IMR-90 (cell line): ENCODE measurements at regions of chr13 and their contacts with region 1.

Region 1: GRCh38 chr13:60182907-60183306 is 19.2 kb upstream of the DIAPH3 start:
- DNase-seq: no peak
- ATAC-seq: no peak
- H3K4me3 ChIP-seq: no peak overlapping the region
- H3K27ac ChIP-seq: no peak overlapping the region
- H3K4me1 ChIP-seq: no peaks in the 10 kb centered on the region
- H3K27me3 ChIP-seq: peaks cover 2% of the 10 kb centered on the region
- CTCF ChIP-seq: no peak
- POLR2A ChIP-seq: no peak
- RAD21 ChIP-seq: no peak

Region 2: GRCh38 chr13:58573743-58574142 is 1609.2 kb before region 1 on chr13:
- CTCF ChIA-PET with region 1: no interaction called
- POLR2A ChIA-PET with region 1: no interaction called
- dilution Hi-C with region 1: no loop called
- in situ Hi-C with region 1: no loop called
- intact Hi-C with region 1: loop called (anchors 10 kb)
- DNase-seq: no peak
- ATAC-seq: no peak
- H3K4me3 ChIP-seq: no peak overlapping the region
- H3K27ac ChIP-seq: no peak overlapping the region
- H3K4me1 ChIP-seq: no peaks in the 10 kb centered on the region
- H3K27me3 ChIP-seq: no peaks in the 10 kb centered on the region
- CTCF ChIP-seq: no peak
- POLR2A ChIP-seq: no peak
- RAD21 ChIP-seq: no peak

Region 3: DNA sequence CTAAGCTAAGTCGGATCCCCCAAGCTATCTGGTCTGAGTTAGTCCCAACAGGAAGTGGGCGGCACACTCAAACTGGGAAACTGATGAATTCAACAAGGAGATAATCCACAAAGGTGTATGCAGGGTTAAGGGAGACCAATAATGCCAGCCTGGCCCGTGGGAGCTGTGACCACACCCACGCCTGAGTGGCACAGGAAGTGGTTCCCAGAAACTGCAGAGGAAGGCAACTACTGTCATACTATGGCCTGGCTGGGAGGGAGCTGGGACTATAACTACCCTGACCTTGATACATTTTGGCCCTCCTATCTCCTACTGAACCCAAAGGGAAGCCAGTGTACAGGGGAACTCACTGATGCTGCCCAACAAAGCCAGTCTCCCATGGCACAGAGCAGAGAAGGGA is 128.6 kb after region 1 on chr13:
- CTCF ChIA-PET with region 1: no interaction called
- POLR2A ChIA-PET with region 1: no interaction called
- dilution Hi-C with region 1: no loop called
- in situ Hi-C with region 1: no loop called
- intact Hi-C with region 1: loop called (anchors 10 kb)
- DNase-seq: no peak
- ATAC-seq: no peak
- H3K4me3 ChIP-seq: no peak overlapping the region
- H3K27ac ChIP-seq: no peak overlapping the region
- H3K4me1 ChIP-seq: no peaks in the 10 kb centered on the region
- H3K27me3 ChIP-seq: peaks cover 5% of the 10 kb centered on the region
- CTCF ChIP-seq: no peak
- POLR2A ChIP-seq: no peak
- RAD21 ChIP-seq: no peak